ENCODE measurements at regions of chr19 and their contacts with region 1.

Region 1: DNA sequence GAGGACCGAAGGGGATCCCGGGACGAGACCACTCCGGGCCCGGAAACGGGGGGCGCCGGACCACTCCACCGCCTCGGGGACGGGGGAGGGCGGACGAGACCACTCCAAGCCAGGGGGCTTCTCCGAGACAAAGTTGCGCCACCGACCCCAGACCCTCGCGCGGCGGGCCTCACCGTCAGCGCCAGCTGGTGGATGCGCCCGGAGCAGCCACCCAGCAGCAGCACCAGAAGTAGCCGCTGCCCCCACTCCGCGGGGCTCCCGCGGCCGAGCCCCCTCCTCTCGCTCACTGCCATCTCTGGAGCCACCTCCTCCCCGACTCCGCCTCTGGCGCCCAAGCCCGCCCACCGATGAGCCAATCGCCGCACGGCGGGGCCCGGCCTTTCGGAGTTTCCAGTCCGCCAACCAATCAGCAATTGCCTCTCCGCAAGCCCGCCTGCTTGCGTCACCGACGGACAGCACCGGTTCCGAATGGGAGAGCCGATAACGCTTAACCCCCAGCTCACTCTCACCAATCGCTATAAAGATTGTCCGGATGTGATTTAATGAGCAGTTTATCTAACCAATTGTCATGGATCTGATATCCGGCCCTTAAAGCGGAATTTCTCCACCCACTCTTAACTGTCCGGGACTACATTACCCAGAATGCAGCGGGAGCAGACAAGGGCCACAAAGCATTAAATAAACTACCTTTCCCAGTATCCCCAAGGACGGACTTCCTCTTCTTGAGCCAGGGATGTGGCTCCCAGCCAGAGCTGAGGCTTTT is at the start of gene GPR108:
- DNase-seq: peak; percentile 98 to 100 (median 99)
- ATAC-seq: peak; percentile 74
- H3K4me3 ChIP-seq: peak within 1 kb of the TSS; percentile 83
- H3K4me3 Mint-ChIP-seq: peak within 1 kb of the TSS; percentile 96
- H3K27ac ChIP-seq: peak within 1 kb of the TSS; percentile 80 to 92
- H3K27ac Mint-ChIP-seq: peak within 1 kb of the TSS; percentile 97
- H3K4me1 ChIP-seq: peaks cover 42% of the 10 kb centered on the region
- H3K4me1 Mint-ChIP-seq: peaks cover 34% of the 10 kb centered on the region
- H3K27me3 ChIP-seq: peaks cover 0 to 3% of the 10 kb centered on the region in 2 experiments
- H3K27me3 Mint-ChIP-seq: no peaks in the 10 kb centered on the region
- CTCF ChIP-seq: no peak
- total RNA-seq, gene GPR108: 31.9 to 33.1 TPM

Region 2: GRCh38 chr19:6199240-6199983 is 538.1 kb before region 1 on chr19:
- CTCF ChIA-PET with region 1: no interaction called
- POLR2A ChIA-PET with region 1: no interaction called
- intact Hi-C with region 1: loop called in 1 of 2 experiments (anchors 5 kb)
- DNase-seq: peak; percentile 98 to 100 (median 100)
- ATAC-seq: peak; percentile 90
- H3K4me3 ChIP-seq: peak overlapping the region; percentile 80 to 99
- H3K4me3 Mint-ChIP-seq: peak overlapping the region; percentile 94
- H3K27ac ChIP-seq: peak overlapping the region; percentile 65 to 73
- H3K27ac Mint-ChIP-seq: peak overlapping the region; percentile 87
- H3K4me1 ChIP-seq: peaks cover 11% of the 10 kb centered on the region
- H3K4me1 Mint-ChIP-seq: peaks cover 10% of the 10 kb centered on the region
- H3K27me3 ChIP-seq: no peaks in the 10 kb centered on the region
- H3K27me3 Mint-ChIP-seq: peaks cover 3% of the 10 kb centered on the region
- CTCF ChIP-seq: peak; percentile 51

Region 3: GRCh38 chr19:6402837-6403608 is 334.4 kb before region 1 on chr19:
- CTCF ChIA-PET with region 1: no interaction called
- POLR2A ChIA-PET with region 1: no interaction called
- intact Hi-C with region 1: no loop called
- DNase-seq: no peak
- ATAC-seq: no peak
- H3K4me3 ChIP-seq: no peak overlapping the region
- H3K4me3 Mint-ChIP-seq: no peak overlapping the region
- H3K27ac ChIP-seq: no peak overlapping the region
- H3K27ac Mint-ChIP-seq: no peak overlapping the region
- H3K4me1 ChIP-seq: no peaks in the 10 kb centered on the region
- H3K4me1 Mint-ChIP-seq: no peaks in the 10 kb centered on the region
- H3K27me3 ChIP-seq: no peaks in the 10 kb centered on the region
- H3K27me3 Mint-ChIP-seq: no peaks in the 10 kb centered on the region
- CTCF ChIP-seq: no peak

Region 4: DNA sequence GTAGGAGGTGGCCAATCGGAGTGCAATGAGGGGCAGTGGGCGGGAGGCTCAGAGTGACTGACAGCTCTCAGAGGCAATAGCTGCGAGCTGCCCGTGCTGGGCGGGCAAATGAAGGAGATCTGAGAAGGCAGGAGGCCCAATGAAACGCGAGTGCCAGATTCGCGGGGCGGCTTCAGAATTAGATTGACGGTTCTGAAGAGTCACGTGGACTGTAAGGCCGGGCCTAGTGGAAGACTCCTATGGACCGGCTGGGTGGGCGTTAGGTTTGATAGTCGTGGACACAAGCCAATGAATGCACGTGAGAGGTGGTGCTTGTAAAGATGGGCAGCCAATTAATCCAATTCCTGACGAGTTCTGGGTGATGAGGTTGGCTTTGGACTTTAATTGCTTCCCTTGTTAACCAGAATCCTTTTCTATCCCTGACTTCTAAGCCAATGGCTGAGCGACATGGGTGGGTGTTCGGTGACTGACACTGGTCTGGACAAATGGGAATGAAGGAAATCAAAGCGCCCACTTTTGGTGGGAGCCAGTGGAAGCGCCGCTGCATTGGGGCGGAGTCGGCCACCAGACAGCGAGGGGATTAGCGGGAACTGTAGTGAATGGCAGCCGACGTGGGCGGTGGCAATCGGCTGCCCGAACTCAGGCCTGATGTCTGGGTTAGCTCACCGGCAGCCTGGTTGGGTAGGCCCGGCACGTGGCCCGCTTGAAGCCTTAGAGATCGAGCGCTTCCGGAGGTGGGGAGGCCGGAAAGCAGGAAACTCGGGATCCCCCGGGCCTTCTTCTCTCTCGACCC is 312.3 kb before region 1 on chr19:
- CTCF ChIA-PET with region 1: no interaction called
- POLR2A ChIA-PET with region 1: interaction called, 5 read pairs
- intact Hi-C with region 1: loop called in 1 of 2 experiments (anchors 1 kb)
- DNase-seq: peak; percentile 97 to 100 (median 98)
- ATAC-seq: peak; percentile 82
- H3K4me3 ChIP-seq: peak overlapping the region; percentile 7 to 48
- H3K4me3 Mint-ChIP-seq: peak overlapping the region; percentile 78
- H3K27ac ChIP-seq: peak overlapping the region; percentile 39 to 92
- H3K27ac Mint-ChIP-seq: peak overlapping the region; percentile 93
- H3K4me1 ChIP-seq: peaks cover 35% of the 10 kb centered on the region
- H3K4me1 Mint-ChIP-seq: peaks cover 37% of the 10 kb centered on the region
- H3K27me3 ChIP-seq: no peaks in the 10 kb centered on the region
- H3K27me3 Mint-ChIP-seq: no peaks in the 10 kb centered on the region
- CTCF ChIP-seq: no peak

Region 5: GRCh38 chr19:6530386-6531161 is 206.9 kb before region 1 on chr19 and contains the start of gene TNFSF9:
- CTCF ChIA-PET with region 1: no interaction called
- POLR2A ChIA-PET with region 1: interaction called, 3 read pairs
- intact Hi-C with region 1: loop called (anchors 5 kb)
- DNase-seq: peak; percentile 60 to 90 (median 82)
- ATAC-seq: peak; percentile 78
- H3K4me3 ChIP-seq: peak within 1 kb of the TSS; percentile 60 to 67
- H3K4me3 Mint-ChIP-seq: peak within 1 kb of the TSS; percentile 88
- H3K27ac ChIP-seq: peak within 1 kb of the TSS in 1 of 2 experiments; percentile 28
- H3K27ac Mint-ChIP-seq: peak within 1 kb of the TSS; percentile 62
- H3K4me1 ChIP-seq: peaks cover 31% of the 10 kb centered on the region
- H3K4me1 Mint-ChIP-seq: peaks cover 32% of the 10 kb centered on the region
- H3K27me3 ChIP-seq: peaks cover 10 to 16% of the 10 kb centered on the region in 2 experiments
- H3K27me3 Mint-ChIP-seq: peaks cover 23% of the 10 kb centered on the region
- CTCF ChIP-seq: no peak
- total RNA-seq, gene TNFSF9: 18.3 to 19.8 TPM

Region 6: DNA sequence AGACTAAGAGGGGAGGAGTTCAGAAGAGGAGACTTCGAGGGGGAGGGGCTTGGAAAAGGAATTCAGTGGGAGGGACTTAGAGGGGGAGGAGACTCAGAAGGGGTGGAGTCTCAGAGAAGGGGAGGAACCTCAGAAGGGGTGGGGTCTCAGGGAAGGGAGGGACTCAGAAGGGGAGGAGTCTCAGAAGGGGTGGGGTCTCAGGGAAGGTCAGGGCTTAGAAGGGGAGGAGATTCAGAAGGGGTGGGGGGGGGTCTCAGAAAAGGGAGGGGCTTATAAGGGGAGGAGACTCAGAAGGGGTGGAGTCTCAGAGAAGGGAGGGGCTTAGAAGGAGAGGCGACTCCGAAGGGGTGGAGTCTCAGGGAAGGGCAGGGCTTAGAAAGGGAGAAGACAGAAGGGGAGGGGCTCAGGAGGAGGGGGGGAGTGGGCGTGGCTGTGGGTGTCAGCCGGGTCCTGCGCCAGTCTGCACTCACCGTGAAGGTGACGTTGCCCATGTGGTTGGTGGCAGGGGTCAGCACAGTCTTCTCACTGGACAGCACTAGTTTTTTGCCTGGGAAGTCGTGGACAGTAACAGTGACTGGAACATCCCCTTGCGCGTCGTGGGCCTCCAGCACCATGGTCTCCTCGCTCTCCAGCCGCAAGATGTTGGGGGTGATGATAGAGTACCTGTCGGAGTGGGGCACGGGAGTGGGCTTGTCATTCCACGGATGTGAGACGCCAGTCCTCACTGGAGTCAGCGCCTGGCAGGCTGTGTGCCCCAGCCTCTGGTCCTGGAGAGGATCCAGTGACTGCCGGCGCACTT is 18.5 kb before region 1 on chr19:
- CTCF ChIA-PET with region 1: no interaction called
- POLR2A ChIA-PET with region 1: no interaction called
- intact Hi-C with region 1: no loop called
- DNase-seq: peak in 3 of 9 experiments; percentile 46 to 62 (median 62)
- ATAC-seq: peak; percentile 83
- H3K4me3 ChIP-seq: no peak overlapping the region
- H3K4me3 Mint-ChIP-seq: no peak overlapping the region
- H3K27ac ChIP-seq: no peak overlapping the region
- H3K27ac Mint-ChIP-seq: no peak overlapping the region
- H3K4me1 ChIP-seq: no peaks in the 10 kb centered on the region
- H3K4me1 Mint-ChIP-seq: peaks cover 12% of the 10 kb centered on the region
- H3K27me3 ChIP-seq: no peaks in the 10 kb centered on the region
- H3K27me3 Mint-ChIP-seq: no peaks in the 10 kb centered on the region
- CTCF ChIP-seq: no peak

Region 7: DNA sequence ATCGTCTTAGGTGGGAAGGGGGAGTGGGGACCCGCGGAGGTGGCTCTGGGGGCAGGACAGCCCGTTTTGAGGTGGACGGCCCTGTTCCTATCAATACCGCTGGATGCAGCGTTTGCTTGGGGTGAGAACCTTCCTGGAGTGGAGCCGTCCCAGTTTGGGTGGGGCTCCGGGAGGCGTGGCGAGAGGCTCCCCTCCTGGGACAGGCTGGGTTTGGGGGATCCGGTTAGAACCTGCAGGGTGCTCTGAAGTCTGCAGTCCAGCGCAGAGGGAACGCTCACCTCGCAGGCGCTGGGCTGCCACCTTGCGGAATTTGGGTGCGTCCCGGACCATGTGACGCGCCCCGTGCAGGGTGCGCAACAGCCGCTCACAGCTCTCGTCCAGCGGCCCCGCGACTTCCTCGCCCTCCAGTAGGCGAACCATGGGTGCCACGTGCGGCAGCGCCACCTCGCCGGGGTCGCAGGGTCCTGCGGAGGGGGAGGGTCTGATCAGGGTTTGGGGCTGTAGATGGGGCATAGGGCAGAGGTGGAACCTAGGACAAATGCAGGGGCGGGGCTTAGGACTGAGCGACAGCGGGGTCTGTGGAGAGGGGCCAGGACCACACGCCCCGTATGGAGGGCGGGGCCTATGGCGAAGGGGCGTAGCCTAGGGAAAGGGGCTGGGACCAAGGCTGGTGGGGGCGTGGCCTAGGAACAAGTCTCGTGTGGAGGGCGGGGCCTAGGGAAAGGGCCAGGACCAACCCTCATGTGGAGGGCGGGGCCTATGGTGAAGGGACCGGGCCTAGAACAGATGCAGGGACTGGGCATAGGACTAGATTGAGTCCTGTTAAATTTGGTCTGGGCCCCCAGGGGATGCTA is 15.9 kb after region 1 on chr19:
- CTCF ChIA-PET with region 1: interaction called, 12 read pairs
- POLR2A ChIA-PET with region 1: no interaction called
- intact Hi-C with region 1: loop called in 1 of 2 experiments (anchors 1 kb)
- DNase-seq: peak; percentile 51 to 89 (median 73)
- ATAC-seq: peak; percentile 90
- H3K4me3 ChIP-seq: peak overlapping the region; percentile 42 to 59
- H3K4me3 Mint-ChIP-seq: peak overlapping the region; percentile 76
- H3K27ac ChIP-seq: peak overlapping the region; percentile 35 to 40
- H3K27ac Mint-ChIP-seq: peak overlapping the region; percentile 81
- H3K4me1 ChIP-seq: peaks cover 4% of the 10 kb centered on the region
- H3K4me1 Mint-ChIP-seq: peaks cover 12% of the 10 kb centered on the region
- H3K27me3 ChIP-seq: no peaks in the 10 kb centered on the region
- H3K27me3 Mint-ChIP-seq: no peaks in the 10 kb centered on the region
- CTCF ChIP-seq: peak; percentile 47

Region 8: GRCh38 chr19:6862673-6863078 is 125.2 kb after region 1 on chr19:
- CTCF ChIA-PET with region 1: interaction called, 101 read pairs
- POLR2A ChIA-PET with region 1: interaction called, 39 read pairs
- intact Hi-C with region 1: loop called in 1 of 2 experiments (anchors 1 kb)
- DNase-seq: peak; percentile 84 to 96 (median 91)
- ATAC-seq: peak; percentile 90
- H3K4me3 ChIP-seq: peak overlapping the region in 1 of 2 experiments; percentile 33
- H3K4me3 Mint-ChIP-seq: peak overlapping the region; percentile 80
- H3K27ac ChIP-seq: peak overlapping the region in 1 of 2 experiments; percentile 68
- H3K27ac Mint-ChIP-seq: peak overlapping the region; percentile 74
- H3K4me1 ChIP-seq: peaks cover 4% of the 10 kb centered on the region
- H3K4me1 Mint-ChIP-seq: peaks cover 17% of the 10 kb centered on the region
- H3K27me3 ChIP-seq: no peaks in the 10 kb centered on the region
- H3K27me3 Mint-ChIP-seq: no peaks in the 10 kb centered on the region
- CTCF ChIP-seq: peak; percentile 61

Region 9: DNA sequence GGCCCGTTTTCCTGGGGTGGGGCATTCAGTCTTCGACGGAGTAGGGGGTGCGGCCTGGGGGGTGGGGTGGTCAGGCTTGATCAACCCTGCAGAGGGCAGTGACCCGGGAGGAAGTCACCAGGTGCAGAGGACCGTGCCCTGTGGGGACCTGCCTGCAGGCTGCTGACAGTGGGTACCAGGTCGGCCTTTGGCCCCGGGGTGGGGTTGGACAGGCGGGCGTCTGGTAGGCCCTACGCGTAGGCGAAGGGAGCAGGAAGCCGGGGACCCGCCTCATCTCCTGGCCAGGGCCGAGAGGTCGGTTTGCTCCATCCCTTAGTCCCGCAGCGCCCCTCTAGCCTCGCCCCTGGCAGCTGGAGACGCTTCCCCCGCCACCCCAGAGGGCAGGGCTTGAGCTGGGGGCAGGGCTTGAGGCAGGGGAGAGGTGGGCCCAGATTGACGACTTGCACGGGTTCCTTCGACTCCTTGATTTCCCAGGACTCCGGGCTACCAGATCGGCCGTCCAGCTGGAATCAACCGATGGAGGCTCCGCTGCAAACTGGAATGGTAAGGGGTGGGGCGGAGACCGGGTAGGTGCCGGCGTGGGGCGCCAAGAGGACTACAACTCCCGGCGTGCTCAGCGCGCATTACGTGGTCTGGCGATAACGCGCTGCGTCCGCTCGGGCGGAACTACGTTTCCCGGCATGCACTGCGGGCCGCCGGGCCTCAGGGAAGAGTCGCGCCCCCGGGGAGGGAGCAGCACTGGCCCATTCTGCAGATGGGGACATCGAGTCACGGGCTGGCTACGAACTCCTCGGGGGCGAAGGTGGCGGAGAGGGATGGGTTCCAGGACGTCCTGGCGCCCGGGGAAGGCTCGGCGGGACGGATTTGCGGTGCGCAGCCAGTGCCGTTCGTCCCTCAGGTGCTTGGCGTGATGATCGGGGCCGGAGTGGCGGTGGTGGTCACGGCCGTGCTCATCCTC is 797.8 kb after region 1 on chr19 and contains the start of gene PNPLA6:
- CTCF ChIA-PET with region 1: no interaction called
- POLR2A ChIA-PET with region 1: no interaction called
- intact Hi-C with region 1: loop called in 1 of 2 experiments (anchors 10 kb)
- DNase-seq: peak; percentile 84 to 96 (median 91)
- ATAC-seq: peak; percentile 77
- H3K4me3 ChIP-seq: peak within 1 kb of the TSS; percentile 96 to 100
- H3K4me3 Mint-ChIP-seq: peak within 1 kb of the TSS; percentile 96
- H3K27ac ChIP-seq: peak within 1 kb of the TSS; percentile 63 to 72
- H3K27ac Mint-ChIP-seq: peak within 1 kb of the TSS; percentile 88
- H3K4me1 ChIP-seq: peaks cover 10% of the 10 kb centered on the region
- H3K4me1 Mint-ChIP-seq: peaks cover 22% of the 10 kb centered on the region
- H3K27me3 ChIP-seq: no peaks in the 10 kb centered on the region
- H3K27me3 Mint-ChIP-seq: no peaks in the 10 kb centered on the region
- CTCF ChIP-seq: no peak
- total RNA-seq, gene PNPLA6: 76.5 to 81.3 TPM